CD4-positive, alpha-beta T cell (primary cell): ENCODE measurements at regions of chr9 and their contacts with region 1.

Region 1: DNA sequence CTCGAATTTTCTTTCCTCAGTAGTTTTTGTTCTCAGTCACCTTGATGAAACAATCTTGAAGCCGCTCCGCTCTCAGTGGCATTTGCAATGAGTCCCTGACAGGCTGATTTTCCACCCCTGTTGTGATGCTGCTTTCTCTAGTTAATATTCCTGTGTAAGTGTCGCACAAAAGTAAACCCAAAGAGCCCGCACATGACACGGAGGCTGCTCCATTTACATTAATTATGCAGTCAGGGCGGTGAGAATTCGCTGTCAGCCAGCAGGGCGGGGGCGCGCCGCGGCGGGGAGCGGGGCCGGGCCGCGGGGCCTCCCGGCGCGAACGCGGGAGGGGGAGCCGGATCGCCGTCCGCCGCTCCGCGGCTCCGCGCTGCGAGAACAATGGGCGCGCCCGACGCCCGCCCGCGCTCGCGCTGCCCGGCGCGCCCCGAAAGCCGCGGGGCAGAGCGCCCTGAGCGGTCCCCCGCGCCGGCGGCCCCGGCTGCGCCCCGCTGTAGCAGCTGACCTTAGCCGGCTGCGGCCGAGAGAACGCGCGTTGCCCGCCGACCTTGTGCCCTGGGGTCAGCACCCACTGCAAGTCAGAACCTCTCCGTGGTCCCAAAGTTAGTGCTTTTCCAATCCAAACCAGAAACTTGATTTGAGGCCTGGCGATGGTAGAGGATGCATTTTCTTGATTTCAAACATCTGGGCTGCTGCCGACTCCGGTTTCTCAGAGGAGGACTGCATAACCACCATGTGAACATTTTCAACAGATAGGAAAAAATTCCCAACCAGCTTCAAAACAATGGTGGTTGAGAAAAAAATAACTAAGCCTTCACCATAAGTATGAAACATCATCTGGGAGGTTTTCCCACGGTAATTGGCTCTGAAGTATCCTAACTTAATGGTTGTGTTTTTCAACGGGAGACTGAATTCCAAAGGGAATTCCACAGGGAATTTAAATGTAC is 142.6 kb downstream of the PBX3 start:
- DNase-seq: peak in 13 of 14 experiments; percentile 3 to 69 (median 26)
- ATAC-seq: peak; percentile 84
- H3K4me3 ChIP-seq: peak overlapping the region; percentile 49
- H3K4me3 Mint-ChIP-seq: peak overlapping the region; percentile 78
- H3K27ac ChIP-seq: no peak overlapping the region
- H3K27ac Mint-ChIP-seq: no peak overlapping the region
- H3K4me1 ChIP-seq: peaks cover 9% of the 10 kb centered on the region
- H3K4me1 Mint-ChIP-seq: peaks cover 28% of the 10 kb centered on the region
- H3K27me3 ChIP-seq: peaks cover 10 to 13% of the 10 kb centered on the region in 2 experiments
- H3K27me3 Mint-ChIP-seq: peaks cover 36% of the 10 kb centered on the region
- CTCF ChIP-seq: no peak

Region 2: DNA sequence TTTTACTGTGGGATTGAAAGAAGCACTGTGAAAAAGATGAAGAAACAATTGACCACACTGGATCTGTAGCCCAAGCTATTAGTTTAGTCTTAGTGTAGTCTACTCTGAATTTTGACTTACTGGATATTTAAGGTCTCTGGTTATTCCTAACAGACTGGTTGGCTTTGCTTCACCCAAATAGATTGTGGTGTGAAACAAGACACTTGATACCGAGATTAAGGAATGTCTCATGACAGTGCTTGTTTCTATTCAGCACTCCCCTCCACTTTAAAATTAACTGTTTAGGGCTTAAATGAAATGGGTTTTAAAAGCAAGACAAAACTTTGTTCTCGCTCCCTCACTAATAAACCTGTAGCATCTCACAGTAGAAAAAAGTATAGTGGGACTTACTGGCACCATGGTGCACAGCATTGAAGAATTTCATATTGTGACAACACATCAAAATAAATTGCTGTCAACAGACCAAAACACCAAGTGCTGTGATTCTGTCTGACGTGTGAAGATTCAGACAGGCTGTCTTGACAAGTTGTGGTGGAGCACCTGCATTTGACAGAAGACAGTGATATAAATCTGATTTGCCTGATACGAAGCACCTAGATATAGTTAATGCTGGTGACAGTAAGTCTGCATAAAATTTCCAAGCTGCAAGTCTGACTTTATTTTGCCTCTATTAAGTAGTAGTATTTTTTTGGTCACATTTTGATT is 69.5 kb before region 1 on chr9:
- CTCF ChIA-PET with region 1: no interaction called
- POLR2A ChIA-PET with region 1: no interaction called
- intact Hi-C with region 1: loop called in 1 of 2 experiments (anchors 5 kb)
- DNase-seq: peak in 3 of 14 experiments; percentile 24 to 51 (median 50)
- ATAC-seq: peak; percentile 46
- H3K4me3 ChIP-seq: no peak overlapping the region
- H3K4me3 Mint-ChIP-seq: peak overlapping the region; percentile 10
- H3K27ac ChIP-seq: no peak overlapping the region
- H3K27ac Mint-ChIP-seq: peak overlapping the region; percentile 77
- H3K4me1 ChIP-seq: peaks cover 9% of the 10 kb centered on the region
- H3K4me1 Mint-ChIP-seq: peaks cover 44% of the 10 kb centered on the region
- H3K27me3 ChIP-seq: no peaks in the 10 kb centered on the region
- H3K27me3 Mint-ChIP-seq: no peaks in the 10 kb centered on the region
- CTCF ChIP-seq: no peak

Region 3: GRCh38 chr9:125854553-125855275 is 35.0 kb before region 1 on chr9:
- CTCF ChIA-PET with region 1: interaction called, 3 read pairs
- POLR2A ChIA-PET with region 1: no interaction called
- intact Hi-C with region 1: loop called in 1 of 2 experiments (anchors 5 kb)
- DNase-seq: no peak
- ATAC-seq: no peak
- H3K4me3 ChIP-seq: no peak overlapping the region
- H3K4me3 Mint-ChIP-seq: no peak overlapping the region
- H3K27ac ChIP-seq: no peak overlapping the region
- H3K27ac Mint-ChIP-seq: no peak overlapping the region
- H3K4me1 ChIP-seq: no peaks in the 10 kb centered on the region
- H3K4me1 Mint-ChIP-seq: no peaks in the 10 kb centered on the region
- H3K27me3 ChIP-seq: no peaks in the 10 kb centered on the region
- H3K27me3 Mint-ChIP-seq: no peaks in the 10 kb centered on the region
- CTCF ChIP-seq: no peak